Psoas muscle (tissue), 8 donors: ENCODE measurements at regions of chr7 and their contacts with region 1.

Region 1: GRCh38 chr7:113918946-113919345 is at the start of gene PPP1R3A:
- DNase-seq: peak in 1 of 2 donors; percentile 55
- ATAC-seq: peak; percentile 92 to 98 (median 94)
- H3K4me3 ChIP-seq: peak within 1 kb of the TSS; percentile 68
- H3K27ac ChIP-seq: peak within 1 kb of the TSS; percentile 86
- H3K4me1 ChIP-seq: peaks cover 8% of the 10 kb centered on the region
- H3K27me3 ChIP-seq: no peaks in the 10 kb centered on the region
- CTCF ChIP-seq: peak; percentile 58
- total RNA-seq, gene PPP1R3A: 52.6 to 124 (median 61.0) TPM

Region 2: GRCh38 chr7:113710310-113711106 is 208.4 kb before region 1 on chr7:
- intact Hi-C with region 1: loop called in 1 of 2 experiments (anchors 10 kb)
- DNase-seq: no peak
- ATAC-seq: peak in 3 of 4 donors; percentile 36 to 66 (median 58)
- H3K4me3 ChIP-seq: no peak overlapping the region
- H3K27ac ChIP-seq: no peak overlapping the region
- H3K4me1 ChIP-seq: peaks cover 4% of the 10 kb centered on the region
- H3K27me3 ChIP-seq: no peaks in the 10 kb centered on the region
- CTCF ChIP-seq: peak; percentile 92

Region 3: GRCh38 chr7:113774182-113774807 is 144.7 kb before region 1 on chr7:
- intact Hi-C with region 1: loop called (anchors 5 kb)
- DNase-seq: no peak
- ATAC-seq: peak; percentile 93 to 100 (median 98)
- H3K4me3 ChIP-seq: peak overlapping the region; percentile 35
- H3K27ac ChIP-seq: peak overlapping the region; percentile 79
- H3K4me1 ChIP-seq: peaks cover 5% of the 10 kb centered on the region
- H3K27me3 ChIP-seq: no peaks in the 10 kb centered on the region
- CTCF ChIP-seq: peak; percentile 58

Region 4: DNA sequence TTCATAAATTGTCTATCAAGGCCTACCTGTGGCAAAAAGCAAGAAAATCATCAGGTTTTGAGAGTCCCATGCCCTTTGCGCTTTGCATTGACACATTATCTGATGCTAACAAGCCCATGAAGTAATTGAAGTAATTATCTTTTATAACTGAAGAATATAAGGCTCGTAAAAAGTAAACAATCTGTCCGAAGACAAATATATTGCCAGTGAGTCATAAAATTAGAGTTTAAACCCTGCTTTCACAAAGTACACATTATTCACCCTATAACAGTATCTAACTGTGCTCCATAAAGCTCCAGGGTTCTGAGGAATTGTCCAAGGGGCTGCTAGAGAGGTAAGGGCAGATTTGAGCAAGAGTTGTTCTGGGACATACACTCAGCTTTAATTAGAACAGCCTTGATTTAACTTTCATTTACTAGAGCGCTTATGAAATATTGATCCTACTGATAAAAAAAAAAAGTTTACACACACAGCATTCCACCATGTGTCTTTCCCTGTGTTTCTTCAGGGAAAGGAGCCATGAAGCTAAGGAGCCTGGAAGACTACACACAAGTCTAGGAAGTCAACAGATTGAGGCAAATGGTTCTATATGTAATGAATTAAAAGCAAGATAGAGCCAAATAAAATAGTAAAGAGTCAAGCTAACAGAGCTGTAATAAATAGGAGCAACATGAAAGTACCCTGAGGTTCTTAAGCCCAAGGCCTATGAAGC is 102.3 kb after region 1 on chr7:
- intact Hi-C with region 1: no loop called
- DNase-seq: no peak
- ATAC-seq: no peak
- H3K4me3 ChIP-seq: no peak overlapping the region
- H3K27ac ChIP-seq: no peak overlapping the region
- H3K4me1 ChIP-seq: no peaks in the 10 kb centered on the region
- H3K27me3 ChIP-seq: no peaks in the 10 kb centered on the region
- CTCF ChIP-seq: no peak